MCF 10A (cell line): ENCODE measurements at regions of chr4 and their contacts with region 1.

Region 1: DNA sequence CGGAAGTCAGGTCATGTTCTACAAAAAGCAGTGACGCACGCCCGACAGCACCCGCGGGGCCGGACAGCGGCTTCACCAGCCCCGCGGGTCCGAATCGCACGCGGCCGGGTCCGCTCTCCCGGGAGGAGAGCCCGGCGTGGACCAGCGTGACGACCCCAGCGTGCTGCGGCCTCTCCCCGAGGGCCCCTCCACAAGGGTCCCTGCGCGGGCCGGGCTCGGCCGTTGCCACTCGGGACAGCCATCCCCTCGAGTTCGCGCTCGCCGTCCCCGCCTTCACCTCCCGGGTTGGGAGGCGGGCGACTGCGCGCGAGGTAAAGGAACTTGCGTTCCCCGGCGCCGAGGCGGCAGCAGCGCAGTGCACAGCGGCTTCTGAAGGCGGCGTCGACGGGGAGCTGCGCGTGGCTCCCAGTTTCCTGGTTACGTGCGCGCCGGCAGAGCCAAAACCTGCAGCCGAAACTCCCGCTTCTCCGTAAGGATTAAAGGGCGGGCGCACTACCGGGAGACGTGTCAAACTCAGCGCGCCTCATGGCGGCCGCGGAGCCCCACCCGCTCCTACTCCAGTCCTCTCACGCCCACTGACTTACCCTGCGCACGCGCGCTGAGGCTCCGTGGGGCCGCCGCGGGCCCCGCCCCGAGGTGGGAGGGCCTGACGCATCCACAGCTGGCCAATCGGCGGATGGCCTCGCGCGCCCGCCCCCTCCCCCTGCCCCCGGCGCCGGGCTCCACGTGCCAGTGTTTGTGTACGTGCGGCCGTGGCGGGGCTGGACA is 416 bp upstream of the LRP2BP start:
- DNase-seq: peak; percentile 99
- H3K4me3 Mint-ChIP-seq: peak overlapping the region; percentile 88
- H3K27ac Mint-ChIP-seq: peak overlapping the region; percentile 99
- H3K4me1 Mint-ChIP-seq: peaks cover 7% of the 10 kb centered on the region
- H3K27me3 Mint-ChIP-seq: no peaks in the 10 kb centered on the region
- CTCF ChIP-seq: no peak

Region 2: GRCh38 chr4:185203486-185204237 is 192.5 kb before region 1 on chr4 and contains the start of gene CFAP97:
- CTCF ChIA-PET with region 1: interaction called, 3 read pairs
- POLR2A ChIA-PET with region 1: interaction called, 32 read pairs
- intact Hi-C with region 1: loop called (anchors 2 kb)
- DNase-seq: peak; percentile 86
- H3K4me3 Mint-ChIP-seq: peak within 1 kb of the TSS; percentile 90
- H3K27ac Mint-ChIP-seq: peak within 1 kb of the TSS; percentile 94
- H3K4me1 Mint-ChIP-seq: peaks cover 13% of the 10 kb centered on the region
- H3K27me3 Mint-ChIP-seq: no peaks in the 10 kb centered on the region
- CTCF ChIP-seq: no peak
- total RNA-seq, gene CFAP97: 80.2 and 95.0 TPM in 2 replicates

Region 3: GRCh38 chr4:185209031-185209851 is 186.9 kb before region 1 on chr4 and contains the start of gene SNX25:
- CTCF ChIA-PET with region 1: interaction called, 3 read pairs
- POLR2A ChIA-PET with region 1: interaction called, 32 read pairs
- intact Hi-C with region 1: loop called (anchors 1 kb)
- DNase-seq: peak; percentile 80
- H3K4me3 Mint-ChIP-seq: peak within 1 kb of the TSS; percentile 80
- H3K27ac Mint-ChIP-seq: peak within 1 kb of the TSS; percentile 79
- H3K4me1 Mint-ChIP-seq: peaks cover 12% of the 10 kb centered on the region
- H3K27me3 Mint-ChIP-seq: no peaks in the 10 kb centered on the region
- CTCF ChIP-seq: no peak
- total RNA-seq, gene SNX25: 10.5 and 14.4 TPM in 2 replicates

Region 4: DNA sequence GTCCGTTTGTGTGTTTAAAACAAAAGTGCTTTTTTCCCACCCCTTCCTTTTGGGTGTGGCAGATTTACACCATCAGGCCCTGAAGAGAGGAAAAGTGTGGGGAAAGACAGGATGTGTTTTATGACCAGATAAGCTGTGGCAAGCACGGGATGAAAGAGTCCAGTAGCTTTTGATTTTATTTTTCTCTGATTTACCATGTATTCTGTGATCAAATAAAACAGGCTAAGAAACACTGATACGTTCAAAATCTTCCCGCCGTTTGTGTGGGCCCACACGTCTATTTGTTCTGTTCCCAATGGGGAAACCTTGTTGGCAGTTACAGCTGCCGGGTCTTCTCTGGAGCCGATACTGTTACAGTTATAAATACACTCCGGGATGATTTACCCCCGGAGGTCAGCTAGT is 11.2 kb before region 1 on chr4:
- CTCF ChIA-PET with region 1: no interaction called
- POLR2A ChIA-PET with region 1: interaction called, 23 read pairs
- intact Hi-C with region 1: no loop called
- DNase-seq: no peak
- H3K4me3 Mint-ChIP-seq: no peak overlapping the region
- H3K27ac Mint-ChIP-seq: no peak overlapping the region
- H3K4me1 Mint-ChIP-seq: peaks cover 10% of the 10 kb centered on the region
- H3K27me3 Mint-ChIP-seq: no peaks in the 10 kb centered on the region
- CTCF ChIP-seq: no peak

Region 5: DNA sequence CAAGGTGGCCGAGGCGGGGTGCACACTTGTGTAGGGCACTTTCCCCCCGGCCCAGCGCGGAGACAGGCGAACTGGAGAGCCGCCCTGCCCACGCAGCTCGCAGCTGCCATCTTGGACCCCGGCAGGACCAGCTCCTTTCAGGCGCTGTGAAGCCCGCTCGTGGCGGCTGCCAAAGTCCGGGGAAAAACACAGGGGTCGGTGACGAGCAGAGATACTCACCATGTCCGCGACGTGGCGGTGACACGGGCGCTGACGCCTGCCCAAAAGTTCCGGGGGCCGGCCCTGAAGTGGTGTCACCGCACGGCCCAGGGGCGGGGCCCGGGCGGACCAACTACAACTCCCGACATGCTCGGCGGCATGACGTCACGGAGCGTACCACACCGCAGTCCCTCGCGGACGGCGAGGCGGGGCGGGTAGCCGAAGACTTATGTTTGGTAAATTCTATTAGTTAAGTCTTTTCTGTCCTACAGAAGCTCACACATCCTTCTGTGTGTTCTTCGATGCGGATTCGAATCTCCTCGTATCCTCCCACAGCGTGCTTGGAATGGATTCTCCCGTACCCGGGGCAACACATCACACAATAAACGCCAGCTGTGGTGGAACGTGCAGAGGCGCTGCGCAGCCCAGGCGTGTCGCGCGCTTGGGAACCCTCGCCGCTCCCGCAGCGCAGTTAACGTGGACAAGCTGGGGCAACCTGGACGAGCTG is 29.7 kb after region 1 on chr4 and contains the start of gene UFSP2:
- CTCF ChIA-PET with region 1: no interaction called
- POLR2A ChIA-PET with region 1: interaction called, 81 read pairs
- intact Hi-C with region 1: no loop called
- DNase-seq: peak; percentile 89
- H3K4me3 Mint-ChIP-seq: peak within 1 kb of the TSS; percentile 84
- H3K27ac Mint-ChIP-seq: peak within 1 kb of the TSS; percentile 100
- H3K4me1 Mint-ChIP-seq: peaks cover 28% of the 10 kb centered on the region
- H3K27me3 Mint-ChIP-seq: no peaks in the 10 kb centered on the region
- CTCF ChIP-seq: no peak
- total RNA-seq, gene UFSP2: 44.4 and 46.4 TPM in 2 replicates

Region 6: GRCh38 chr4:185587427-185588161 is 191.5 kb after region 1 on chr4:
- CTCF ChIA-PET with region 1: no interaction called
- POLR2A ChIA-PET with region 1: no interaction called
- intact Hi-C with region 1: no loop called
- DNase-seq: no peak
- H3K4me3 Mint-ChIP-seq: no peak overlapping the region
- H3K27ac Mint-ChIP-seq: no peak overlapping the region
- H3K4me1 Mint-ChIP-seq: peaks cover 8% of the 10 kb centered on the region
- H3K27me3 Mint-ChIP-seq: no peaks in the 10 kb centered on the region
- CTCF ChIP-seq: no peak